Heart right ventricle (tissue), 16 donors: ENCODE measurements at regions of chr12 and their contacts with region 1.

Region 1: GRCh38 chr12:48890657-48891418 is 25.2 kb upstream of the RND1 start:
- DNase-seq: peak; percentile 75 to 82
- ATAC-seq: peak; percentile 96 to 99 (median 98)
- H3K4me3 ChIP-seq: peak overlapping the region in 8 of 10 donors; percentile 19 to 41 (median 35)
- H3K27ac ChIP-seq: no peak overlapping the region
- H3K4me1 ChIP-seq: peaks cover 0 to 11% (median 8%) of the 10 kb centered on the region in 9 donors
- H3K27me3 ChIP-seq: peaks cover 0 to 21% (median 5%) of the 10 kb centered on the region in 7 donors
- CTCF ChIP-seq: peak; percentile 84 to 98 (median 95)

Region 2: GRCh38 chr12:48857278-48857994 is 33.4 kb before region 1 on chr12:
- intact Hi-C with region 1: loop called (anchors 1 to 5 kb)
- DNase-seq: no peak
- ATAC-seq: no peak
- H3K4me3 ChIP-seq: no peak overlapping the region
- H3K27ac ChIP-seq: no peak overlapping the region
- H3K4me1 ChIP-seq: peaks cover 3 to 8% (median 7%) of the 10 kb centered on the region in 9 donors
- H3K27me3 ChIP-seq: peaks cover 0 to 4% (median 0%) of the 10 kb centered on the region in 7 donors
- CTCF ChIP-seq: no peak